ENCODE measurements at regions of chr5 and their contacts with region 1.

Region 1: DNA sequence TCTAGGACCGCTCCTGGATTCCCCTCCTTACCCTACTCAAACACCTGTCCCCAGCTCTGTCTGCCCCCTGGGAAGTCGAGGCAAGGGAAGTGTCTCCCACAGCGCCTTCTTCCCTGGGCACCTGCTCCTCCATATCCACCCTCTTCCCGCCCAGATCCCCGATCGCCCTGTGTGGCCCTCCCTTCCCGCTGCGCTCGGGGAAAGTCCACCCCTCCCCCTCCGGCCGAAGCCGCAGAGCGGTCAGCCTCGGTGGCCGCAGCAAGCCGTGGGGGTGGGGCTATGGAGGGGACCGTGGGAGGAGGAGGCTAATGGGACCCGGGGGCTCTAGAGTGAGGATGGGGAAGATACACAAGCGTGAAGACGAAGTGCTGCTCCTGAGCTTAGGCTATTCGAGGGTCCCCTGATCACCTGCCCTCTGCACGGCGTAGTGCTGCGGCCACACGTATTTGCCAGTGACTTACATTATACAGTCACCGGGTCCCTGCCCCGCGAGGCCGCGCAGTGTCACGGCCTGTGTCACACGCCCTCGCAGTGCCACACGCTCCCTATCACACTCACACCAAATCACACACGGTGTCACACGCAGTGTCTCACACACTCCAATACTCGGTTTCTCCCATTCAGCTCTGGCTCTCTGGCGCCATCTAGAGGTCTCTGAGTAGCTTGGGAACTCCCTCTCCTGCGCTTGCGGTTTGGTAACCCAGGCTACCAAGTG is 658 bp upstream of the PCDH1 start:
- H3K4me3 Mint-ChIP-seq: peak overlapping the region; percentile 66
- H3K27ac Mint-ChIP-seq: no peak overlapping the region
- H3K4me1 Mint-ChIP-seq: peaks cover 38% of the 10 kb centered on the region
- H3K27me3 Mint-ChIP-seq: peaks cover 93% of the 10 kb centered on the region

Region 2: DNA sequence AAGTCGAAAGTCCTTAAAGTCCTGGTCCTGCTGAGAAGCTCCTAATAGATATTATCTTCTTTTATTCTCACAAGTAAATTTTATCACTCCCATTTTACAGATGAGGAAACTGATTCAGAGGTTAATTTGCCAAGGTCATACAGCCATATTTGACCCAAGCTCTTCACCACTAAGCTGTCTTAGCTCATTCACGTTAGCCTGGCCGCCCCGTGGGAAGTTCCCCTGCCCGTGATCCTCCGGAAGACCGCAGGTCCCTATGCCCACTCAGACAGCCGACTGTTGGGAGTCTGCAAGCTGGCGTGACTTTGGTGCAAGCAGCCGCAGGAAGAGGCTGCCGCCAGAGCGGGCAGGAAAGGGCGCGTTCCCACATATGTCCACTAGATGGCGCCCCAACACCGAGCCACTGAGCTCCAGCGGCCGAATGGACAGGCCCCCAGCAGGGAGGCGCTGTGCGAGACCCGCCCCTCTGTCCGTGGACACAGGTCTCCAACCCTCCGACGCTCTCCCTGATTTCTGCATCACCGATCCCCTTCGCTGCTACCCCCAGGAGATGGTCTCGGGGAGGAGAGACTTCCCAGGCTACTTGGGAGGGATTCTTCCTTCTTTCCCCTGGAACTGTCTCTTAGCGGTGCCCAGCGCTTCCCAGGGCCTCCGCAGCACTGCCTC is 186.9 kb before region 1 on chr5:
- intact Hi-C with region 1: loop called (anchors 2 kb)
- H3K4me3 Mint-ChIP-seq: peak overlapping the region; percentile 57
- H3K27ac Mint-ChIP-seq: peak overlapping the region; percentile 50
- H3K4me1 Mint-ChIP-seq: peaks cover 34% of the 10 kb centered on the region
- H3K27me3 Mint-ChIP-seq: peaks cover 36% of the 10 kb centered on the region

Region 3: GRCh38 chr5:141701360-141702119 is 177.3 kb before region 1 on chr5:
- intact Hi-C with region 1: loop called (anchors 1 kb)
- H3K4me3 Mint-ChIP-seq: no peak overlapping the region
- H3K27ac Mint-ChIP-seq: no peak overlapping the region
- H3K4me1 Mint-ChIP-seq: peaks cover 17% of the 10 kb centered on the region
- H3K27me3 Mint-ChIP-seq: peaks cover 33% of the 10 kb centered on the region

Region 4: DNA sequence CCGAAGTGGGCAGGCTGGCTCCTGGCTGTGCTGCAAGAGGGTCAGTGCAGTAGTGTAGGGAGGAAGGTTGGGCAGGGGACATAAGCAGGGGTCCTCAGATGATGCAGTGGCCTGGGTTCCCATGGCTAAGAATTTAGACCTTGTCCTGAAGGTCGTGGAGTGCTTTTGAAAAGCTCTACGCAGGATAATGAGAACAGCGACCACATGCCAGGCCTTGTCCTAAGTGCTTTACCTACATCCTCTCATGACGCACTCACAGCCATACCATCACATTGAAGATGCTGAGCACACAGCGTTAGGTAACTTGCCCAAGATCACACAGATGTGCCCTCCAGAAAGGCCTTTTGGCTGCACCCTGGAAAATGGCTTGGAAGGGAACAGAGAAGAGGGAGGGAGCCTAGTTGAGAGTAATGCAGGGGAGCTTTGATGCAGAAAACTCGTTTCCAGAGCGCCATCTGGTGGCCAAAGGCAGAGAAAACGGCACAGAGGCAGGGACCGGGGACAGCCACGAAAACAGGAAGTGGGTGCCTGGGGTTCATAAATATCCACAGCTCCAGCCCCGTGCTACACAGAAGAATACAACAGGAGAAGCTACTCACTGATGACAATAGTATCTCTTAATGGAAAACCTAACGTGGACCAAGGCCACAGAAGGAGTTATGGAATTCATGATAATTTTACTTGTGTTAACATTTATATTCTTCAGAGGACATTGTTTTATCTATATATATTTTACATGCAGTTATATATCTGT is 81.8 kb after region 1 on chr5:
- intact Hi-C with region 1: loop called (anchors 2 kb)
- H3K4me3 Mint-ChIP-seq: no peak overlapping the region
- H3K27ac Mint-ChIP-seq: no peak overlapping the region
- H3K4me1 Mint-ChIP-seq: peaks cover 41% of the 10 kb centered on the region
- H3K27me3 Mint-ChIP-seq: peaks cover 6% of the 10 kb centered on the region

Measured in dendritic cell treated with granulocyte-macrophage colony-stimulating factor and Interleukin-4, amounts not matched to agents 40 ng/mL and 50 ng/mL, for 4 days (primary cell).